ENCODE measurements at regions of chr12 and their contacts with region 1.

Region 1: DNA sequence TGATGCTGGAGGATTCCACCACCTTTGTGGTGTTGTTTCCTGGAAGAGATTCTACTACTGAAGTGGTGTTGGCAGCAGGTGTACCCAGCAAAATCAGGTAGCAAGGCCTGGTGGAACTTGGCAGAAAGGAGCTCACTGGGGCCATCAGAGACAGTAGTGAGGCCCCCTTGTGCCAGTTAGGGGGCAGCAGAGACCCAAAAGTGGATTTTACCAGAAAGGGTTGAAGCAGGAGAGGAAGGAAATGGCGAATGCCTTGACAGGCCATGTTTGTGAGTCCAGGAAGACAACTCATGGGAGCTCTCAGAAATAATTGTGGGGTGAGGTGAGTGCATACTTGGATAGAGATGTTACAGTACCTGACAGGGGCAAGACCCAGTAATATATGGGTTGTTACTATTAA is 137.7 kb upstream of the FGD4 start:
- DNase-seq: peak; percentile 46
- H3K4me3 Mint-ChIP-seq: no peak overlapping the region
- H3K27ac Mint-ChIP-seq: no peak overlapping the region
- H3K4me1 Mint-ChIP-seq: peaks cover 21% of the 10 kb centered on the region
- H3K27me3 Mint-ChIP-seq: no peaks in the 10 kb centered on the region

Region 2: DNA sequence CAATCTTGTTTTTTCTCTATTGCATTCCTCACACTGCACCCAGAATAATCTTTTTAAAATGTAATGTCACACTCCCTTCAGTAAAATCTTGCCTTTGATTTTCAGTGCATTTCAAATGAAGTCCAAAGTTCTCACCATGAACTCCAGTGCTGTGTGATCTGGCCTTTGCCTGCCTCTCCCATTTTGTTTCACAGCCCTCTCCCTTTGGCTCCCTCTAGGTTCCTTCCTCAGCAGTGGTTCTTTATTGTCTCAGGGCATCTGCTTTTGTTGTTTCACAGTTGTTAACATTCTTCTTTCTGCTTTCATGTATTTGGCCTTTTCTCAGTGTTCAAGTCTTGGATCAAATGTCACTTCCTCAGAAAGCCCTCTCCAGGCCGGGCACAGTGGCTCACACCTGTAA is 448.3 kb before region 1 on chr12:
- CTCF ChIA-PET with region 1: no interaction called
- intact Hi-C with region 1: loop called (anchors 5 kb)
- DNase-seq: no peak
- H3K4me3 Mint-ChIP-seq: no peak overlapping the region
- H3K27ac Mint-ChIP-seq: no peak overlapping the region
- H3K4me1 Mint-ChIP-seq: peaks cover 18% of the 10 kb centered on the region
- H3K27me3 Mint-ChIP-seq: no peaks in the 10 kb centered on the region

Region 3: DNA sequence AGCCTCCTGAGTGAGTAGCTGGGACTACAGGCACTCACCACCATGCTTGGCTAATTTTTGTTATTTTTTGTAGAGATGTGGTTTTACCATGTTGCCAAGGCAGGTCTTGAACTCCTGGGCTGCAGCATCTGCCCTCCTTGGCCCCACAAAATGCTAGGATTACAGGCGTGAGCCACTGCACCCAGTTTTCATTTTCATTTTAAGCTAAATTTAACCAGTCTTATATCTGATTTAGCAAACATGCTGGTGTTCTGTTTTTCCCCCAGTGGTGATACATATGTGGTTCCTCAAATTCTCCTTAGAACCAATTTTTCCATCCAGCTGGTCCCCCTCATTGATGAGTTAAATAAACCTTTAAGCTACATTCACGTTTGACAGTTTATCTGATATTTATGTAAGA is 198.8 kb before region 1 on chr12:
- CTCF ChIA-PET with region 1: no interaction called
- intact Hi-C with region 1: loop called (anchors 2 kb)
- DNase-seq: no peak
- H3K4me3 Mint-ChIP-seq: no peak overlapping the region
- H3K27ac Mint-ChIP-seq: no peak overlapping the region
- H3K4me1 Mint-ChIP-seq: peaks cover 11% of the 10 kb centered on the region
- H3K27me3 Mint-ChIP-seq: no peaks in the 10 kb centered on the region

Region 4: DNA sequence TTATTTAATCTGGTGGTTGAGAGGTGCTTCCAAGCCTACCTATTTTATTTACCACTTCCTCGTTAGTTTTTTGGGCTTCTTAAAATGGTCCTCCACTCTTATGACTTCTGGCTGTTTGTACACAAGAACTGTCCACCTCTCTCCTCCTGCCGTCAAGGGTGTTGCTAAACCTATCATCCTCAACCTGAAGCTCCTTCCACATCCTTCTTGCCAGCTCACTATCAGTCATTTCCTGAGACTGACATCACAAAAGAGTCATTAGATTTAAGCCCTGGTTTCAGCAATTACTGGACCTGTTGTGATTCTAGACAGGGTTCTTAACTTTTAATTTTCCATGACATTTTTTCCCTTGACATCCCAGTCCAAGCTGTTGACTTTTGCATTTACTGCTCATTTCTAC is 63.1 kb before region 1 on chr12:
- CTCF ChIA-PET with region 1: no interaction called
- intact Hi-C with region 1: loop called (anchors 5 kb)
- DNase-seq: peak; percentile 12
- H3K4me3 Mint-ChIP-seq: no peak overlapping the region
- H3K27ac Mint-ChIP-seq: no peak overlapping the region
- H3K4me1 Mint-ChIP-seq: peaks cover 5% of the 10 kb centered on the region
- H3K27me3 Mint-ChIP-seq: no peaks in the 10 kb centered on the region

Region 5: DNA sequence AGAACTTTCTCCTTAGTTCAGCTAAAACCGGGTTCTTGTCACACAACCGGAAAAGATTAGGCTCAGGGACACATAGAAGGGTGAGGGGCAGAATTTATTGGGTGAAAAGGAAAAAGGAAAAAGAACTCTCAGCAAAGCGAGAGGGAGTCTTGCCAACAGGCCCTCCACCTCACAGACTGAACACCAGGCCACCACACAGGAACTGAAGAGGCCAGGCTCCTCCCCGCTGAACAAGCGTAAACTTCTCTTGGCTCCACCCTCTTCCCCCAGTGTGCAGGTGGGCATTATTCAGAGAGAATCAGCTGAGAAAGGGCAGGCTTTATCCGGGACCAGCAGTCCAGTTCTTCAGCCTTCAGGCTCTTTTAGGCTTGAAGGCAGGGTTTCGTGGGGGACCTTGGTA is 12.1 kb after region 1 on chr12:
- CTCF ChIA-PET with region 1: interaction called, 3 read pairs
- intact Hi-C with region 1: loop called (anchors 1 kb)
- DNase-seq: peak; percentile 70
- H3K4me3 Mint-ChIP-seq: peak overlapping the region; percentile 58
- H3K27ac Mint-ChIP-seq: peak overlapping the region; percentile 91
- H3K4me1 Mint-ChIP-seq: peaks cover 19% of the 10 kb centered on the region
- H3K27me3 Mint-ChIP-seq: no peaks in the 10 kb centered on the region

Region 6: GRCh38 chr12:32312049-32312670 is 50.5 kb after region 1 on chr12:
- CTCF ChIA-PET with region 1: interaction called, 3 read pairs
- intact Hi-C with region 1: loop called (anchors 2 kb)
- DNase-seq: no peak
- H3K4me3 Mint-ChIP-seq: no peak overlapping the region
- H3K27ac Mint-ChIP-seq: no peak overlapping the region
- H3K4me1 Mint-ChIP-seq: peaks cover 2% of the 10 kb centered on the region
- H3K27me3 Mint-ChIP-seq: no peaks in the 10 kb centered on the region

Region 7: GRCh38 chr12:33439282-33440011 is 1177.8 kb after region 1 on chr12 and contains the start of gene SYT10:
- CTCF ChIA-PET with region 1: no interaction called
- intact Hi-C with region 1: no loop called
- DNase-seq: no peak
- H3K4me3 Mint-ChIP-seq: peak within 1 kb of the TSS; percentile 55
- H3K27ac Mint-ChIP-seq: no peak within 1 kb of the TSS
- H3K4me1 Mint-ChIP-seq: peaks cover 3% of the 10 kb centered on the region
- H3K27me3 Mint-ChIP-seq: peaks cover 35% of the 10 kb centered on the region
- total RNA-seq, gene SYT10: not detected